ENCODE measurements at regions of chr3 and their contacts with region 1.

Region 1: DNA sequence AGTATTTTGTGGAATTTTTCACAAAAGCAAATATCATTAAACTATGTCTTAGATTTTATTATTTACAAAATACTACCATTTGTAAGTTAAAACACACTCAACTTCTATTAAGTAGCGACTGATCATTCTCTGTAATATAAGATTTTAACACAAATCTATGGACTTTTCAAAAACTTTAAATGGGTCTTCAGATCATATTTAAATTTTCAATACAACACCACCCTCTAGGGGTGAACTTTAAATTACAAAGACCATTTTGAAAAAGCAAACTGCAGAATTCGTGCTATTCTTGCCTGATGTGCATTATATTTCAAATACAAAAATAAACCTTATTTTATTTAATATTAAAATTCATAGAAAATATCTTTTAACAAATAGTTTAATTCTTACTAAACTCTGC is 8.2 kb upstream of the VGLL4 start:
- DNase-seq: no peak
- H3K4me3 Mint-ChIP-seq: no peak overlapping the region
- H3K27ac Mint-ChIP-seq: no peak overlapping the region
- H3K4me1 Mint-ChIP-seq: no peaks in the 10 kb centered on the region
- H3K27me3 Mint-ChIP-seq: peaks cover 2% of the 10 kb centered on the region

Region 2: DNA sequence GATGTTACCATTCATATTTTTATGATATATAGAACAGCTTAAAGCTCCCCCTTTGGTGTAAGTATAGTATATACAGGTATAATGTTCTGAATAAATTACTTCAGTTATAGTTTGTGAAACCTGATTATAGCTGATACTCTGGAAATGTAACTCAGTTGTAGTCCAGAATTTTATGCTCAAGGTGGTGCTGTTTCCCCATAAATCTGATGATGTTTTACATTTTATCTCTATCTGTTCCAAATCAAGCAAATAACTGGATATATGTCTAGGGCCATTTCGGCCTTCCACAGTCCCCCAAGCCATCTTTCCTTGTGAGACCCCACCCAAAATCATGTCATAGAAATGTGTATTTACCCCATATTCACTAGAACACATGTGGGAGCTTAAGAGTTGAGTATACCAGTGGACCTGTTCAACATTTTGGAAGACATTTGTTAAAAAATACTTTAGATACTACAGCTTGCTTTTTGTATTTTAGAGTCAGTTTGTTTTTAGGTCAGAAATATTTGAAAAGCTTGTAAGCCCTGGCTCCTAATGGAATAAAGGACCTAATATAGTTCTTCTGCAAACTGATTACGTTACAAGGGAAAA is 272.6 kb before region 1 on chr3:
- CTCF ChIA-PET with region 1: interaction called, 37 read pairs
- POLR2A ChIA-PET with region 1: no interaction called
- DNase-seq: no peak
- H3K4me3 Mint-ChIP-seq: no peak overlapping the region
- H3K27ac Mint-ChIP-seq: no peak overlapping the region
- H3K4me1 Mint-ChIP-seq: peaks cover 3% of the 10 kb centered on the region
- H3K27me3 Mint-ChIP-seq: no peaks in the 10 kb centered on the region

Region 3: GRCh38 chr3:11680509-11680908 is 28.6 kb after region 1 on chr3:
- CTCF ChIA-PET with region 1: no interaction called
- POLR2A ChIA-PET with region 1: no interaction called
- DNase-seq: no peak
- H3K4me3 Mint-ChIP-seq: no peak overlapping the region
- H3K27ac Mint-ChIP-seq: no peak overlapping the region
- H3K4me1 Mint-ChIP-seq: no peaks in the 10 kb centered on the region
- H3K27me3 Mint-ChIP-seq: no peaks in the 10 kb centered on the region